ENCODE measurements at regions of chr9 and their contacts with region 1.

Region 1: GRCh38 chr9:37503736-37504135 is 18.0 kb downstream of the POLR1E start:
- DNase-seq: peak; percentile 69 to 72
- ATAC-seq: peak; percentile 98 to 99 (median 98)
- H3K4me3 ChIP-seq: peak overlapping the region; percentile 16
- H3K4me3 Mint-ChIP-seq: peak overlapping the region; percentile 90
- H3K27ac ChIP-seq: peak overlapping the region; percentile 80
- H3K27ac Mint-ChIP-seq: peak overlapping the region; percentile 90 to 97
- H3K4me1 ChIP-seq: peaks cover 34% of the 10 kb centered on the region
- H3K4me1 Mint-ChIP-seq: peaks cover 63 to 66% of the 10 kb centered on the region in 2 donors
- H3K27me3 ChIP-seq: no peaks in the 10 kb centered on the region
- H3K27me3 Mint-ChIP-seq: no peaks in the 10 kb centered on the region
- CTCF ChIP-seq: no peak

Region 2: GRCh38 chr9:36873247-36873875 is 630.4 kb before region 1 on chr9:
- intact Hi-C with region 1: no loop called
- DNase-seq: peak; percentile 57 to 85
- ATAC-seq: peak; percentile 70 to 88 (median 76)
- H3K4me3 ChIP-seq: no peak overlapping the region
- H3K4me3 Mint-ChIP-seq: no peak overlapping the region
- H3K27ac ChIP-seq: no peak overlapping the region
- H3K27ac Mint-ChIP-seq: no peak overlapping the region
- H3K4me1 ChIP-seq: no peaks in the 10 kb centered on the region
- H3K4me1 Mint-ChIP-seq: peaks cover 0 to 5% of the 10 kb centered on the region in 2 donors
- H3K27me3 ChIP-seq: no peaks in the 10 kb centered on the region
- H3K27me3 Mint-ChIP-seq: peaks cover 5% of the 10 kb centered on the region in 2 donors
- CTCF ChIP-seq: peak; percentile 92

Region 3: GRCh38 chr9:37415011-37415719 is 88.6 kb before region 1 on chr9:
- intact Hi-C with region 1: loop called (anchors 10 kb)
- DNase-seq: peak; percentile 55 to 87
- ATAC-seq: peak; percentile 82 to 99 (median 97)
- H3K4me3 ChIP-seq: no peak overlapping the region
- H3K4me3 Mint-ChIP-seq: peak overlapping the region; percentile 40
- H3K27ac ChIP-seq: no peak overlapping the region
- H3K27ac Mint-ChIP-seq: peak overlapping the region in 1 of 2 donors; percentile 74
- H3K4me1 ChIP-seq: peaks cover 17% of the 10 kb centered on the region
- H3K4me1 Mint-ChIP-seq: peaks cover 7% of the 10 kb centered on the region in 2 donors
- H3K27me3 ChIP-seq: no peaks in the 10 kb centered on the region
- H3K27me3 Mint-ChIP-seq: peaks cover 6 to 7% of the 10 kb centered on the region in 2 donors
- CTCF ChIP-seq: peak; percentile 84

Region 4: DNA sequence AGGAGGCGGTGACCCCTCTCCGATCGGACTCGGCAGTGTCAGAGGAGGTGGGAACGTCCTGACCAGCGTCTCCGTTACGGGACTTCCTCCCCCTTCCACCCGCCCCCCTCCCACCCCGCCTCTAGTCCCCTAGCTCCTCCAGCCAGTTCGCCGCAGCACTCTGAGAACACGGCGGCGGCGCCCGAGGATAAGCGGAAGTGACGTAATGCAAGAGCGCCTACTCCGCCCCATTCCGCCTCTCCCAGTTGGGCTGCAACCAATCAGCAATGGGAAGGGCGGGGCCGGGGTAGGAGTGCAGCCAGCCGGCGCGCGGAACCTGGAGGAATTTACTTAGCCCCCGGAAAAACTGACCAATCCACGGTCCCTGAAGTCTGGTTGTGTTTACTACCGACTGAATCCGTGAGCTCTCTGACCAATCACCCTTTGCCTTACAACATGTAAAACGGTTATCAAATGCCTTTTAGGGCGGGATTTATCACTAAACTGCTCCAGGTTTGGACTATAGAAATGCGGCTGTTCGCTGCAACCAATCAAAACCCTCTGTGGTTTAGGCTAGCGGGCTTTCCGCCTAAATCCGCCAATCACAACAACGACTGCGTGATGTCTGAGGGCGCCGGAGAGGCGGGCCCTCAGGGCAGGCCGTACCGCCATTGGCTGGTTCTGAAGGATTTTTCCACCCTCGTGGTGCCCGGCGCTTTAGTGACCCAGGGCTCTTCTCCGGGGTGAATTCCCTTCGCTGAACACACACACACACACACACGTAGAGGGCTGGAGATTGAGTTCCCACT is 38.3 kb before region 1 on chr9 and contains the start of gene ZBTB5:
- intact Hi-C with region 1: loop called (anchors 1 kb)
- DNase-seq: peak; percentile 99
- ATAC-seq: peak; percentile 77 to 90 (median 80)
- H3K4me3 ChIP-seq: peak within 1 kb of the TSS; percentile 94
- H3K4me3 Mint-ChIP-seq: peak within 1 kb of the TSS; percentile 92
- H3K27ac ChIP-seq: peak within 1 kb of the TSS; percentile 98
- H3K27ac Mint-ChIP-seq: peak within 1 kb of the TSS; percentile 94 to 96
- H3K4me1 ChIP-seq: peaks cover 15% of the 10 kb centered on the region
- H3K4me1 Mint-ChIP-seq: peaks cover 26 to 44% of the 10 kb centered on the region in 2 donors
- H3K27me3 ChIP-seq: no peaks in the 10 kb centered on the region
- H3K27me3 Mint-ChIP-seq: no peaks in the 10 kb centered on the region
- CTCF ChIP-seq: no peak
- total RNA-seq, gene ZBTB5: 12.6 to 14.2 (median 13.3) TPM

Region 5: DNA sequence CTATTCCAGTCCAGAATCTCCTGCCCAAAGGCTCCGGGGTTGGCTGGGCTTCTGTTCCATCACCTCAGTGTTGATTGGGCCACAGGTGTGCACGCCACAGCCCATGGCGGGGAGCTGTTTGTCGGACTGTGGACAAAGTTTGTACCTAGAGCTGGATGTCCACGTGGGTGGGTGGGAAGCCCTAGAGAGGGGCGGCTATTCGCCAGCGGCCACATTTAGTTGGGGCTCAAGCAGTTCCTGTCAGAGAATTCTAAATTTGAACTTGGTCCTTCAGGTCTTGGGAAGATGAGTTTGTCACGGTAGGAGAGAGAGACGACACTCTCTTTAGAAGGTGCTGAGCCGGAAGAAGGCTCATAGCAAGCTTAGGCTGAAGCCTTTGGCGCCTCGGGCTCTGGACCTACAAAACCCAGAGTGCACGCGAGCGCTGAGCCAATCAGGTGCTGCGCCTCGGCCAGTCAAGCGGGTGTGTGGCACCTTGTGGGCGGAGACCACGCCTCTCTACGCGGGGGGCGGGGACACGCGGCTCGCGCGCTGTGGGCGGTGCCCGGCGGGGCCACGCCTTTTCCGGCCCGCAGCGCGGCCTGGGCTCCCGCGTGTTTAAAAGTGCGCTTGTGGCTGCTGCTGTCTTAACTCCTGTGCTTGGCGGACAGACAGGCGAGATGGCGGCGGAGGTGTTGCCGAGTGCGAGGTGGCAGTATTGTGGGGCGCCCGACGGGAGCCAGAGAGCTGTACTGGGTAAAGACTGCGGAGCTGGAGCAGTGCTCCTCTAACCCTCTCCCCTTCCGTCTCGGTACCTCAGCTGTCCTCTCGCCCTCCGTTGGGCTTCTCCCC is 18.1 kb before region 1 on chr9 and contains the start of gene POLR1E:
- intact Hi-C with region 1: loop called (anchors 2 kb)
- DNase-seq: peak; percentile 98
- ATAC-seq: peak; percentile 96 to 99 (median 97)
- H3K4me3 ChIP-seq: peak within 1 kb of the TSS; percentile 92
- H3K4me3 Mint-ChIP-seq: peak within 1 kb of the TSS; percentile 88
- H3K27ac ChIP-seq: peak within 1 kb of the TSS; percentile 71
- H3K27ac Mint-ChIP-seq: peak within 1 kb of the TSS; percentile 88 to 96
- H3K4me1 ChIP-seq: peaks cover 22% of the 10 kb centered on the region
- H3K4me1 Mint-ChIP-seq: peaks cover 28 to 35% of the 10 kb centered on the region in 2 donors
- H3K27me3 ChIP-seq: no peaks in the 10 kb centered on the region
- H3K27me3 Mint-ChIP-seq: peaks cover 6 to 8% of the 10 kb centered on the region in 2 donors
- CTCF ChIP-seq: no peak
- total RNA-seq, gene POLR1E: 17.4 to 23.8 (median 17.8) TPM

Region 6: GRCh38 chr9:37592108-37592951 is 88.6 kb after region 1 on chr9 and contains the start of gene TOMM5:
- intact Hi-C with region 1: loop called (anchors 5 kb)
- DNase-seq: peak; percentile 83 to 95
- ATAC-seq: peak; percentile 97 to 98 (median 98)
- H3K4me3 ChIP-seq: peak within 1 kb of the TSS; percentile 85
- H3K4me3 Mint-ChIP-seq: peak within 1 kb of the TSS; percentile 99
- H3K27ac ChIP-seq: peak within 1 kb of the TSS; percentile 61
- H3K27ac Mint-ChIP-seq: peak within 1 kb of the TSS; percentile 93 to 94
- H3K4me1 ChIP-seq: peaks cover 30% of the 10 kb centered on the region
- H3K4me1 Mint-ChIP-seq: peaks cover 26 to 32% of the 10 kb centered on the region in 2 donors
- H3K27me3 ChIP-seq: peaks cover 5% of the 10 kb centered on the region
- H3K27me3 Mint-ChIP-seq: peaks cover 9 to 12% of the 10 kb centered on the region in 2 donors
- CTCF ChIP-seq: no peak
- total RNA-seq, gene TOMM5: 29.3 to 38.9 (median 36.7) TPM